H1 (cell line): ENCODE measurements at regions of chr20 and their contacts with region 1.

Region 1: GRCh38 chr20:2133318-2134183 is 31.9 kb downstream of the STK35 start:
- DNase-seq: no peak
- H3K4me3 ChIP-seq: no peak overlapping the region
- H3K27ac ChIP-seq: no peak overlapping the region
- H3K4me1 ChIP-seq: peaks cover 2 to 19% (median 10%) of the 10 kb centered on the region in 4 experiments
- H3K27me3 ChIP-seq: no peaks in the 10 kb centered on the region
- CTCF ChIP-seq: no peak
- EP300 ChIP-seq: no peak
- POLR2A ChIP-seq: no peak
- RAD21 ChIP-seq: no peak

Region 2: GRCh38 chr20:2032155-2032554 is 101.4 kb before region 1 on chr20:
- CTCF ChIA-PET with region 1: no interaction called
- POLR2A ChIA-PET with region 1: no interaction called
- DNase-seq: no peak
- H3K4me3 ChIP-seq: no peak overlapping the region
- H3K27ac ChIP-seq: no peak overlapping the region
- H3K4me1 ChIP-seq: 0 out of 7 replicates have a peak, but pooled peaks cover 0 to 3% (median 1%) of the 10 kb centered on the region in 4 experiments
- H3K27me3 ChIP-seq: no peaks in the 10 kb centered on the region
- CTCF ChIP-seq: no peak
- EP300 ChIP-seq: no peak
- POLR2A ChIP-seq: no peak
- RAD21 ChIP-seq: no peak

Region 3: DNA sequence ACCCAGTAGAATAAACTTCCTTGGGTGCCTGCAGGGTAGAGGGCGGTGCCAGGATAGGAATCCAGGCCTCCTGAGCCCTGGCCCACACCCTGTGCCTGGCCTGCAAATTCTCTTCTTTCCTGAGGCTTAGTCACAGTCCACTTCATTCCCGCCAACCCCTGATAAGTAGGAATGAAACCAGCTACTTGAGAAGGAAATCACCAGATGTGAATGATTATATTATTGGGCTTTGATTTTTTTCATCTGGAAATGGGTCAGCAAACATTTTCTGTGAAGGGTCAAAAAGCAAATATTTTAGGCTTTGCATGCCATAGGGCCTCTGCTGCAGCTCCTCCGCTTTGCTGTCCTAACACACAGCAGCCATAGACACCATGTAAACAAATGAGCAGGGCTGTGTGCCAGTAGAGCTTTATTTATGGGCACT is 18.3 kb after region 1 on chr20:
- CTCF ChIA-PET with region 1: interaction called, 13 read pairs
- POLR2A ChIA-PET with region 1: interaction called, 5 read pairs
- DNase-seq: no peak
- H3K4me3 ChIP-seq: no peak overlapping the region
- H3K27ac ChIP-seq: no peak overlapping the region
- H3K4me1 ChIP-seq: peaks cover 2 to 6% (median 4%) of the 10 kb centered on the region in 4 experiments; a peak in 5 of 7 replicates
- H3K27me3 ChIP-seq: no peaks in the 10 kb centered on the region
- CTCF ChIP-seq: no peak
- EP300 ChIP-seq: no peak
- POLR2A ChIP-seq: no peak
- RAD21 ChIP-seq: no peak